Activated T-helper 1 cell treated with anti-CD3 and anti-CD28 coated beads, Interleukin-12 subunit alpha, Interleukin-12 subunit beta, Interleukin-2, Interleukin-4 antibody, amounts not matched to agents 30 ng/mL and 10 ng/mL and 1 ng/mL, durations not matched to agents 14 hours and 24 hours and 36 hours (primary cell): ENCODE measurements at regions of chr1 and their contacts with region 1.

Region 1: DNA sequence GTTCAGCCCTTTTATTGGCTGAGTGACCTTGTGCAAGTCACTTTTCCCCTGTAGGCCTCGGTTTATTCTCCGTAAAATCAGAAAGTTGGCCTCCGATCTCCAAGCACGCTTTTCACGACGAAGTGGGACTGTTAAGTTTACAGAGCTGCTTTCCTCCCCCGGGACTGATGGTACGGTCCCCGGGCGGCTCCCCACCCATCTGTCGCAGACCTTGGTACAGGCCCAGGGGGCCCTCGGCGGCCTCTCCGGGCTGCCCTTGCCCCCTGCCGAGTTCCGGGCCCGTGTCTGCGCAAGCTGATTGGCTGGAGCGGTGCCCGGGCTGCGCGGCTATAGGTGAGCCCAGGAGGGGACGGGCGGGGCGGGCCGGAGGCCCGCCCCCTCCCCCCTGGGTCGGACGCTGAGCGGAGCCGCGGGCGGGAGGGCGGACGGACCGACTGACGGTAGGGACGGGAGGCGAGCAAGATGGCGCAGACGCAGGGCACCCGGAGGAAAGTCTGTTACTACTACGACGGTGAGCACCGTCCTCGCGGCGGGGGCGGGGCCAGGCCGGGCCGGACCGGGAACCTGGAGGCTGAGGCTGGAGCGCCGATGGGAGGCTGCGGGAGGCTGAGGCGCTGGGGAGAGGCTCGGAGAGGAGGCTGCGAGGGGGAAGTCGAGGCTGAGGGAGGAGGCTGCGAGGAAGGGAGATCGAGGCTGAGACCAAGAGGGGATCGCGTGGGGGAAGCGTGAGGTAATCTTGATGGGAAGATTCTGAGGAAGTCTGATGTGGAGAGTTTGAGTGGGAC is at the start of gene HDAC1:
- DNase-seq: peak; percentile 96
- H3K4me3 Mint-ChIP-seq: peak within 1 kb of the TSS; percentile 93
- H3K27ac Mint-ChIP-seq: peak within 1 kb of the TSS; percentile 94
- H3K4me1 Mint-ChIP-seq: peaks cover 37% of the 10 kb centered on the region
- H3K27me3 Mint-ChIP-seq: no peaks in the 10 kb centered on the region
- total RNA-seq, gene HDAC1: 177 and 179 TPM in 2 replicates

Region 2: GRCh38 chr1:31855038-31855845 is 436.7 kb before region 1 on chr1:
- intact Hi-C with region 1: no loop called
- DNase-seq: no peak
- H3K4me3 Mint-ChIP-seq: no peak overlapping the region
- H3K27ac Mint-ChIP-seq: no peak overlapping the region
- H3K4me1 Mint-ChIP-seq: no peaks in the 10 kb centered on the region
- H3K27me3 Mint-ChIP-seq: peaks cover 2% of the 10 kb centered on the region

Region 3: GRCh38 chr1:32200226-32201010 is 91.5 kb before region 1 on chr1 and contains the start of gene CCDC28B:
- intact Hi-C with region 1: loop called (anchors 1 kb)
- DNase-seq: peak; percentile 55
- H3K4me3 Mint-ChIP-seq: peak within 1 kb of the TSS; percentile 92
- H3K27ac Mint-ChIP-seq: peak within 1 kb of the TSS; percentile 97
- H3K4me1 Mint-ChIP-seq: peaks cover 69% of the 10 kb centered on the region
- H3K27me3 Mint-ChIP-seq: no peaks in the 10 kb centered on the region
- total RNA-seq, gene CCDC28B: 28.2 and 32.6 TPM in 2 replicates

Region 4: DNA sequence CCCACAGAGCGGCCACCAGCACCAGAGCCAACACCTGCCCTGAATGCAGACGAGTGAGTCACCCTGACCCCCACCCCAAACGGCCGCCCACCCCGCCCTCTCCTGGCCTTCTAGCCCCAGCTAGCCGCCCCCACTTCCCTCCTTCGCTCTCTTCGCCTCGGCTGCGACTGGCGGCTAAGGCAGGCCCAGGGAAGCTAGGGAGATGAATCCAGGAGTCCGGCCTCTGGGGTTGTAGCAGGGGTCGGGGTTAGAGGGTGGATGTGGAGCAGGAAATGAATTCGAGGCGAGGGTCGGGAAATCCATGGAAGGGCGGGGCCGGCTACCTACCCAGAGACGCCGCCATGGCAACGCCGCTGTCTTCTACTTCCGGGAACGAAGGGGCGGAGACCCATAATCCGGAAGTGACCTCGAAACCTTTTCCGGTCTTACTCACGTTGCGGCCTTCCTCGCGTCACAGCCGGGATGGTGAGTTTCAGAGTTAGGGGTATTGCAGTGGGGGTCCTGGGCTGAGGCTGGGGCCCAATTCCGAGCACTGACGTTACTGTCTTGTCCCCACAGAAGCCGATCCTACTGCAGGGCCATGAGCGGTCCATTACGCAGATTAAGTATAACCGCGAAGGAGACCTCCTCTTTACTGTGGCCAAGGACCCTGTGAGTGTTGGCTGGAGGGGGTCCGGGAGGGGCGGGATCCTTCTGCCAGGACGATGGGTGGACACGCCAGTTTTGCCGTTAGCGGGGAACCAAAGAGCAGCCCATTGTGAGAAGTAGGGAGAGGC is 69.7 kb before region 1 on chr1 and contains the starts of genes EIF3I and TMEM234:
- intact Hi-C with region 1: loop called (anchors 1 kb)
- DNase-seq: peak; percentile 89
- H3K4me3 Mint-ChIP-seq: peak within 1 kb of the TSS; percentile 98
- H3K27ac Mint-ChIP-seq: peak within 1 kb of the TSS; percentile 95
- H3K4me1 Mint-ChIP-seq: peaks cover 25% of the 10 kb centered on the region
- H3K27me3 Mint-ChIP-seq: no peaks in the 10 kb centered on the region
- total RNA-seq, gene EIF3I: 297 TPM in 2 replicates
- total RNA-seq, gene TMEM234: 13.5 and 15.0 TPM in 2 replicates

Region 5: DNA sequence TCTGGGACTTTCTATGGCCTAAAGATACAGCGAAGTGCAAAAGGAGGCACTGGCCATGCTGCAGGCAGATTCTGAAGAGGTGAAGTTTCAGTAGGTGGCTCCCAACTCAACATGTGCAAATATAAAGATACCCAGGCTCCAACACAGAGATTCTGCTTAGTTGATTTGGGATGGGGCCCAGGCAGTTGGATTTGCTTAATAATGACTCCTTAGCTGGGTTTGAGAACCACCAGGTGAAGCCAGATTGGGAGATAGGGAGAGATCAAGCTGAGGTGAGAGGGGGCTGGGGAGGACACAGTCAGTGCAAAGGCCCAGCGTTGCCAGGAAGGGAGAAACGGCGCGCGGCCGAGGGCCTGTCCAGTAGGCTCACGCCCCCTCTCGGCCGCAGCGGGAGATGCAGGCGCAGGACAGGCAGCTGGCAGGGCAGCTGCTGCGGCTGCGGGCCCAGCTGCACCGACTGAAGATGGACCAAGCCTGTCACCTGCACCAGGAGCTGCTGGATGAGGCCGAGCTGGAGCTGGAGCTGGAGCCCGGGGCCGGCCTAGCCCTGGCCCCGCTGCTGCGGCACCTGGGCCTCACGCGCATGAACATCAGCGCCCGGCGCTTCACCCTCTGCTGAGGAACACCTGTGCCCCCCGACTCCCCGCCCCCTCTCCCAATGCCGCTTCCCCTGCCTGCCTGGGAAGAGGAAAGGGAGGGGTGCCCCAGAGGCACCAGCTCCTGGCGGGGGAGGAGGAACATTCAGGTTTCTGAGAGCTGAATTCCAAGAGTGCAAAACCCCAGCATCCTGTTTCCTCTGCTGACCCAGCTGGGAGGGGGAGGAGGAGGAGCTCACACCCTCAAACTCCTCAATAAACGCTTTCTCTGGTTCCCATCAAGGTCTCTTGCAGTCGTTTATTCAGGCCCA is 43.7 kb before region 1 on chr1:
- intact Hi-C with region 1: loop called (anchors 1 kb)
- DNase-seq: peak; percentile 73
- H3K4me3 Mint-ChIP-seq: peak overlapping the region; percentile 46
- H3K27ac Mint-ChIP-seq: peak overlapping the region; percentile 95
- H3K4me1 Mint-ChIP-seq: peaks cover 51% of the 10 kb centered on the region
- H3K27me3 Mint-ChIP-seq: no peaks in the 10 kb centered on the region

Region 6: DNA sequence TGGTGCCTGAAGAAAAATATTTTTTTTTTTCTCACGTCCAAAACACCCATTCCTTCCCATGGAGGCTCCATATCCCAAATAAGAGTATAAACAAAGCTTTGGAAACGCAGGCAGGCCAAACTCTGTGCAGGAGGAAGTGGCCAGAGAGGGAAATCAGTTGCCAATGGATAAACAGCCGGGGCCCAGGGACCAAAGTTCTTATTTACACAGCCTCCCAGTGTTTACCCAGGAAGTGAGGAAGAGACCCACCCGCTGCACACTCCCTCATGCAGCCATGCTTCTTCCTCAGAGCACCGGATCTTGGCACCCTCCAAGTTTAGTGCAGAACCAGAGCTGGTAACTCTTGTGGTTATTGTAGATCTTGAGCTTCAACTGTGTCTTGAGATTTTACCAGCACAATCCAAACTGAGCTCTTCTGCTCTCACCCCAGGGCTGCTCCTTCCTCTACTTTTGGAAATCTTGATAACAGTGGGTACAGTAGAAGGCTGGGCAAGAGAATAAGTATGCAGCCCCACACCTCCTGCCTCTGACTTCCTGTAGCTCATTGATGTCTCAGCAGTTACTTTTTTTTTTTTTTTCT is 29.9 kb after region 1 on chr1:
- intact Hi-C with region 1: loop called (anchors 2 kb)
- DNase-seq: no peak
- H3K4me3 Mint-ChIP-seq: peak overlapping the region; percentile 53
- H3K27ac Mint-ChIP-seq: peak overlapping the region; percentile 83
- H3K4me1 Mint-ChIP-seq: peaks cover 49% of the 10 kb centered on the region
- H3K27me3 Mint-ChIP-seq: no peaks in the 10 kb centered on the region

Region 7: DNA sequence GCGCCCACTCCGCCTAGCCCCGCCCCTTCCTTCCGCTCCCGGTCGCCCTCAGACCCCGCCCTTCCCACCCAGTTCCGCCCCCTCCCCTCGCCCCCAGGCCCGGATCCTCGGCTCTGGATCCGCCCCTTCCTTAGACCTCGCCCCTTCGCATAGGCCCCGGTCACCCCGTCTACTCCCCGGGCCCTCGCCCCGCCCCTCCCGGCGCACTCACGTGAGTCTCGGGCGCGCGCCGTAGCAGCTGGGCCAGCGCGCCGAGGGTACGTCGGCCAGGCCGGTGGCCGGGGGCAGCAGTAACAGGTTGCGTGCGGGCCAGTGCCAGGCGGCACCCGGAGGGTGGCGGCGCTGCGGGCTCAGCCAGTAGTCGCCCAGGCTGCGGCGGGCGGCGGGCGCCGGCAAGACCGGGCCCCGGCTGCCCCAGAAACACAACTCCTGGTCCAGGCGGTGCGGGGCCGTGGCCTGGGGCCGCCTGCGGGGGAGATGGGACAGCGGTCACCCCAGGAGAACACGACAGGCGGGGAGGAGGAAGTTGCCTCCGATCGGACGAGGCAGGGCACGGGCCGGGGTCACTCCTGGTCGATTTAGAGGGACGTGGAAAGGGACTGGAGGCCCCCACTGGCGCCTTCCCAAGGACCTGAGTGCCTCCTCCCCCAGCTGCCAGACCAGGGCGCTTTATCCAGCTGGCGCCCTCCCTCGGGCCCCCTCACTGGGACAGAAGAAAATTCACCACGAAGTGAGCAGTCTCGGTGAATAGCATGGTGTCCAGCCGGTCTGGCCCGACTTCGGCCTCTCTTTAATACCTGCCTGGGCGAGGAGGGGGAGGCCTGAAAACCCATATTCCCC is 59.7 kb after region 1 on chr1:
- intact Hi-C with region 1: loop called (anchors 1 kb)
- DNase-seq: peak; percentile 89
- H3K4me3 Mint-ChIP-seq: peak overlapping the region; percentile 82
- H3K27ac Mint-ChIP-seq: peak overlapping the region; percentile 53
- H3K4me1 Mint-ChIP-seq: peaks cover 35% of the 10 kb centered on the region
- H3K27me3 Mint-ChIP-seq: peaks cover 6% of the 10 kb centered on the region

Region 8: GRCh38 chr1:32650752-32651460 is 359.0 kb after region 1 on chr1 and contains the start of gene RBBP4:
- intact Hi-C with region 1: loop called (anchors 2 kb)
- DNase-seq: peak; percentile 99
- H3K4me3 Mint-ChIP-seq: peak within 1 kb of the TSS; percentile 94
- H3K27ac Mint-ChIP-seq: peak within 1 kb of the TSS; percentile 100
- H3K4me1 Mint-ChIP-seq: peaks cover 55% of the 10 kb centered on the region
- H3K27me3 Mint-ChIP-seq: peaks cover 2% of the 10 kb centered on the region
- total RNA-seq, gene RBBP4: 315 TPM in 2 replicates